Activated T-helper 2 cell treated with anti-CD3 and anti-CD28 coated beads, Interferon-gamma antibody, Interleukin-2, Interleukin-4, amounts not matched to agents 10 μg/mL and 5 μg/mL and 100 μg/mL, durations not matched to agents 14 hours and 24 hours and 36 hours (primary cell): ENCODE measurements at regions of chr10 and their contacts with region 1.

Region 1: GRCh38 chr10:29443745-29444523 is 155.1 kb downstream of the LYZL1 start:
- DNase-seq: no peak
- H3K4me3 Mint-ChIP-seq: no peak overlapping the region
- H3K27ac Mint-ChIP-seq: no peak overlapping the region
- H3K4me1 Mint-ChIP-seq: peaks cover 30% of the 10 kb centered on the region
- H3K27me3 Mint-ChIP-seq: no peaks in the 10 kb centered on the region

Region 2: GRCh38 chr10:29386342-29386999 is 57.5 kb before region 1 on chr10:
- intact Hi-C with region 1: loop called (anchors 2 kb)
- DNase-seq: no peak
- H3K4me3 Mint-ChIP-seq: no peak overlapping the region
- H3K27ac Mint-ChIP-seq: no peak overlapping the region
- H3K4me1 Mint-ChIP-seq: peaks cover 6% of the 10 kb centered on the region
- H3K27me3 Mint-ChIP-seq: peaks cover 8% of the 10 kb centered on the region

Region 3: DNA sequence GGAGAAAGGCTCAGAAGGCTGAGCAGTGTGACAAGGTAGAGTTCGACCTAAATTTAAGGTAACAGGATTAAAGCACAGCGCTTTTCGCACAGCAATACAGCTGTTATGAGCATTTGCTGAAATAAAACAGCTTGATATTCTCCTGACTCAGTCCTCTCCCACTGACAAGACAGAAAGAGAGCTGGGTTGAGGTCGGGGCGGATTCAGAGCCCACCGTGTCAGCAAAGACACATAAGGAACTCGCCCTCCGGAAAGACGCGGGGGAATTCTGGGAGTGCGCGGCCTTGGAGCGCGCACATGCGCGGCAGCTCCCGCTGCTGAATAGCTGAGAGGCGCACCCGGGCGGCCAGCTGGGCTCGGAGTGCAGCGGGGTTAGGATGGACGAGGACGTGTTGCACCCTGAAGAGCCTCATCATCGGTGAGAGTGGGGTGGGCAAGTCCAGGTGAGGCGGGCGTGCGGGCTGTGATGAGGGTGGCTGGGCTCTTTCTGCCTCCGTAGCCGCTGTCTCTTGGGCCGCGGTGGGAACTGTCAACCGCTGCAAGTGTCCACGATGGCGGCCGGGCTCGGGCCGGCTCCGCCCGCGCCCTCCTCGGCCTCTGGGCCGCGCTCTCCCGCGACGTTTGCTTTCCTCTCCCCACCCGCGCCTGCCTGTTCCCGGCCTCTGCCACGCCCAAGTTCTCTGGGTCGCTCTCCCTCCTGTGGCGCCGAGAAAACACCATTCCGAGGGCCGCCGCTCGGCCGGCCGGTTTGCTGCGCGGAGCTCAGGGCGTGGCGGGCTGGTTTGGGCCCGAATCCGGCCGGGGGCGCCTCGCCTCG is 34.5 kb before region 1 on chr10:
- intact Hi-C with region 1: loop called (anchors 5 kb)
- DNase-seq: peak; percentile 36
- H3K4me3 Mint-ChIP-seq: peak overlapping the region; percentile 97
- H3K27ac Mint-ChIP-seq: peak overlapping the region; percentile 89
- H3K4me1 Mint-ChIP-seq: peaks cover 31% of the 10 kb centered on the region
- H3K27me3 Mint-ChIP-seq: no peaks in the 10 kb centered on the region

Region 4: DNA sequence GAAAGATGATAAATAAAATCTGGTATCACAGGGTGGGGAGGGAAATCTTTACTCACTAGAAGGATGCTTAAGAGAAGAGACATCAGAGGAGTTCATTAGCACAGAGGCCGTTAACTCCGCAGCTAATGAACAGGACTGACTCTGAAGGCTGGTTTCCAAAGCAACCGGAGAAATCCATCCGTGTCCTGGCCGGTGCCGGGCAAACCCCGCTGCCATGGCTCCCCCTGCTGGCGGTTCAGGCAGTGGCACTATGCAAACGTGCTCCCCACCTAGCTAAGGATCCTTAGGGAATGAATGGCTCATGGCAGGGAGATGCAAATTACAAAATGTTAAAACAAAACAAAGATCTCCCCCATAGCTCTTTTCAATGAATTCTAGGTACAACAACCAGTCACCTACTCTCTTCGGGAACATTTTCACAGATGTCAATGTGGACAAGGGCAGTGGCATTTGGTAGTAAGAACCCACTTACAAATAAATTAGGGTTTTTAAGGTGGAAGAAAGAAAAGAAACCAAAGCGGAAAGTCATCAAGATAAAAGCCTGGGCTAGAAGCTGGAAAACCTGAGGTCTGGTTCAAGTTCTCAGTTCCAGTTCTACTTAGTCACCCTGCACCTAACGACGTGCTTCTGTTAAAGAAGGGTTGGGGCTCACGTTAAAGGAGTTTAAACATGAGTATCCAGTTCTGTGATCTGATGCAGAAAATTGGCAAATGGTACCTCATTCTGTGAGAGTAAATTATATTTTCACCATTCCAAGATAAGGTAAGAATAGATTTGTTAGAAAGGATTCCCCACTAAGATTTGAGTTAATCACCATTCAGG is 52.6 kb after region 1 on chr10:
- intact Hi-C with region 1: loop called (anchors 1 kb)
- DNase-seq: peak; percentile 34
- H3K4me3 Mint-ChIP-seq: no peak overlapping the region
- H3K27ac Mint-ChIP-seq: peak overlapping the region; percentile 9
- H3K4me1 Mint-ChIP-seq: peaks cover 13% of the 10 kb centered on the region
- H3K27me3 Mint-ChIP-seq: no peaks in the 10 kb centered on the region

Region 5: DNA sequence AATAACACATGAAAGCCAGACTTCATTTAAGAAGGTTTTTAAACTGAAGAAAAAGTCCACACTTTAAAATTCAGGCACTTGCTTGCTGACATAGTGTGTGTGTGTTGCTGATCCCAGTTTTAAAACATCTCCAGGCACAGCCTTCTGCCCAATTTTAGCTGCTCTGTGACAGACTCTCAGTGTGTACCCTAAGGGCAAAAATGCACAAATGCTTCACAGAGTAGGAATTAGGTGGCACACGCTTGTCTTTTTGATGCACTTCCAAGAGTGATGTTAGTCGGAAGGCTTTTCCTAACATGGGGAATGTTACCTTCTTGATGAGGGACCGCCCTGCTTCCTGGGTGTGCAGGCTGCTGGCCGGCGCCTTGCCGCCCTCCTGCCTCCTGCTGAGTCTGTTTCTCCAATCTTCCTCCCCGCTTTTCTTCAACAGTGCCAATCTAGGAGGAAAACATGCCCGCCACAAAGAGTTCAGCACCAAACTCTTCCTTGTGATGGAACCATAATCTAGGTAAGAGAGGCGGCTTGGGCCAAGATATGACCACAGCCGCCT is 68.6 kb after region 1 on chr10:
- intact Hi-C with region 1: loop called (anchors 5 kb)
- DNase-seq: no peak
- H3K4me3 Mint-ChIP-seq: no peak overlapping the region
- H3K27ac Mint-ChIP-seq: no peak overlapping the region
- H3K4me1 Mint-ChIP-seq: peaks cover 3% of the 10 kb centered on the region
- H3K27me3 Mint-ChIP-seq: no peaks in the 10 kb centered on the region

Region 6: GRCh38 chr10:29598851-29599311 is 154.9 kb after region 1 on chr10:
- intact Hi-C with region 1: loop called (anchors 10 kb)
- DNase-seq: no peak
- H3K4me3 Mint-ChIP-seq: no peak overlapping the region
- H3K27ac Mint-ChIP-seq: no peak overlapping the region
- H3K4me1 Mint-ChIP-seq: no peaks in the 10 kb centered on the region
- H3K27me3 Mint-ChIP-seq: no peaks in the 10 kb centered on the region